Heart left ventricle (tissue), 16 donors: ENCODE measurements at regions of chr18 and their contacts with region 1.

Region 1: DNA sequence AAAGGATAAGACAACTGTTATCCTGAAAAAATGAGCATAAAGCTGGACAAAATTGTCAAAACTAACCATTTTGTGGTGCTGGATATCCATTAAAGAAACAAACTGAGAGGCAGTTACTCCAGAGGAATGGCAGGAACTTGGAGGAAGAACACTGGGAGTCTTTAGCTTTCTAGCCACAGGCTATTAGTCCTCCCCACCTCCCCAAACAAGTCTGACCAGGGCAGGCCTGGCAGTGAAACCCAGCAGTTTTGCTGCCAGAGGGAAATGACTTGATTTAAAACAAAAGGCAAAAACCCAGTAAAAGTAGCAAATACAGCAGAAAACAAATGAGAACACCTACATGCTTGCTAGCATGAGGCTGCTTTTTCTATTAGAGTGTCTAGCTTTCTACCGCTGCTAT is 34.9 kb downstream of the OSBPL1A start:
- DNase-seq: no peak
- ATAC-seq: no peak
- H3K4me3 ChIP-seq: no peak overlapping the region
- H3K27ac ChIP-seq: no peak overlapping the region
- H3K4me1 ChIP-seq: peaks cover 0 to 4% (median 0%) of the 10 kb centered on the region in 12 donors
- H3K27me3 ChIP-seq: no peaks in the 10 kb centered on the region
- CTCF ChIP-seq: no peak
- POLR2A ChIP-seq: no peak

Region 2: DNA sequence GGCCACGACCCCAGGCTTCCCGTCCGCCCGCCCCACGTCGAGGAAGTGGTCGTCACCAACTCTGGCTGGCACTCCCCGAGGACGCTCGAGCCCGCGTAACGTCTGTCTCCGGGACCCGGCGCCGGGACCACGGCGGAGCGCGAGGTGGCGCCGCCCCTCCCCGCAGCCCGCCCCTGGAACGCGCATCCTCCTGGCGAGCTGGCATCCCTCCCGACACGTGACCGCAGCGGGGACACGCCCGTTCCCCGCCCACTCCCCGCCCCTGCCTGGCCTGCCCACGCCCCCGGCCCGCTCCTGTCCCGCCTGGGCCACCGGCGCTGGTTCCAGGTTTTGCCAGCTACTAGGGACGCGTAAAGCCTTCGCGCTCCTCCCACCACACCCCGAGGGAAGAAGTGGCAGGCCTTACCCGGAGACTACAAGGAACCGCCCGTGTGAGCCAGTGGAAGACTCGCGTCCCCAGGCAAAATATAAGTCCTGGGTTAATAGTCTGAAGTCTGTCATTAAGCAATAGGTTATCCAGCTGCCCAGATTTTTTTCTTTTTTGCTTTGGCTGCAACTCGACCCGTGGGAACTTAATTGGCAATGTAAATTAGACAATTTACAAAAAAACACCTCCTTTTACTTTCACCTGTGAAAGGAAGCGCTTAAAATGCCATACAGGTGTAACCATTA is 35.1 kb after region 1 on chr18 and contains the start of gene OSBPL1A:
- intact Hi-C with region 1: loop called in 3 of 10 experiments (anchors 5 kb)
- DNase-seq: peak; percentile 95 to 98 (median 96)
- ATAC-seq: peak; percentile 97 to 99 (median 98)
- H3K4me3 ChIP-seq: peak within 1 kb of the TSS; percentile 65 to 88 (median 76)
- H3K27ac ChIP-seq: peak within 1 kb of the TSS in 11 of 12 donors; percentile 66 to 94 (median 84)
- H3K4me1 ChIP-seq: peaks cover 0 to 20% (median 6%) of the 10 kb centered on the region in 12 donors
- H3K27me3 ChIP-seq: no peaks in the 10 kb centered on the region
- CTCF ChIP-seq: peak in 1 of 12 donors; percentile 28
- POLR2A ChIP-seq: peak in 1 of 2 donors; percentile 54
- total RNA-seq, gene OSBPL1A: 49.7 to 85.4 (median 76.1) TPM

Region 3: GRCh38 chr18:24413148-24413547 is 50.4 kb after region 1 on chr18:
- intact Hi-C with region 1: loop called in 3 of 10 experiments (anchors 5 to 10 kb)
- DNase-seq: no peak
- ATAC-seq: peak in 1 of 4 donors; percentile 38
- H3K4me3 ChIP-seq: no peak overlapping the region
- H3K27ac ChIP-seq: no peak overlapping the region
- H3K4me1 ChIP-seq: no peaks in the 10 kb centered on the region
- H3K27me3 ChIP-seq: peaks cover 0 to 14% (median 0%) of the 10 kb centered on the region in 9 donors
- CTCF ChIP-seq: peak in 8 of 12 donors; percentile 18 to 46 (median 38)
- POLR2A ChIP-seq: no peak

Region 4: DNA sequence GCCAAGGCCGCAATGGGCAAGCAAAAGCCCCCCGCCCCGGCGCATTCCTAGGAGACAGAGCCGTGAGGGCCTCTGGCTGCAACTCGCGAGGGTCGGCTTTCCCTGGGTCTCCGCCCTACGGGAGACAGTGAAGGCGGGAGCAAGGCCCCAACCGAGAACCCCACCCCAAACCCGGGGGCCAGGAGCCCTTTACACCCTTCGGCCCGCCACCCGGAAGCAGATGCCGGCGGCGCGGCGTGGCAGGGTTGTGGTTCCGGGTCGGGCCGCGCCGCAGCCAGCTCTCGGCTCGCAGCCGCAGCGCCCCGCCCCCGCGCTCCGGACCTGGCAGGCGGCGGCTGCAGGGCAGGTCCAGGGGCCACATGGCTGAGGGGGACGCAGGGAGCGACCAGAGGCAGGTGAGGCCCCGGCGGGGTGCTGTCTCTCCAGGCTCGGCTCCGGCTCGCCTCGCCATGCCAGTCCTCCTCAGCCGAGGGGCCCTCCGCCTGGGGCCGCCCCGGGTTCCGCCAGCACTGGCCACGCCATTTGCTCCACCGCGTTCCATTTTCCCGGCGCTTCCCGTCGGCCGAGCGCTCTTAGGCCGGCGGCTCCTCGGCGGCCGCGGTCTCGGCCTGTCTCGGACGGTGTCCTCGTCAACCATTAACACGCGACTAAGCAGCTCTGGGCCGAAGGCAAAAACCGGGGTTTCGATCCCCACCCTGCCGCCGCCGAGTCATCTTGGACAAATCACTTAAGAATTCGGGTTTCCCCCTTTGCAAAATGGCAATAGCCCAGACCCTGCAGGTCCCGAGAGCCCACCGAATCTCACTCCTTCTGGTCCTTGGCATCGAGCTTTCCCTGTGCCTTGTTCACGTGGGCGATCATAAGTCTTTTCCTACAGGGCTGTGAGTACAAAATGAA is 63.9 kb after region 1 on chr18 and contains the start of gene IMPACT:
- intact Hi-C with region 1: loop called in 2 of 10 experiments (anchors 5 to 10 kb)
- DNase-seq: peak; percentile 86 to 93 (median 88)
- ATAC-seq: peak; percentile 75 to 100 (median 97)
- H3K4me3 ChIP-seq: peak within 1 kb of the TSS; percentile 56 to 96 (median 85)
- H3K27ac ChIP-seq: peak within 1 kb of the TSS; percentile 19 to 92 (median 82)
- H3K4me1 ChIP-seq: peaks cover 0 to 18% (median 9%) of the 10 kb centered on the region in 12 donors
- H3K27me3 ChIP-seq: peaks cover 0 to 31% (median 0%) of the 10 kb centered on the region in 9 donors
- CTCF ChIP-seq: no peak
- POLR2A ChIP-seq: peak in 1 of 2 donors; percentile 64
- total RNA-seq, gene IMPACT: 10.8 to 37.6 (median 23.8) TPM

Region 5: GRCh38 chr18:24488824-24489493 is 126.2 kb after region 1 on chr18:
- intact Hi-C with region 1: loop called (anchors 1 to 5 kb)
- DNase-seq: no peak
- ATAC-seq: peak in 1 of 4 donors; percentile 61
- H3K4me3 ChIP-seq: no peak overlapping the region
- H3K27ac ChIP-seq: no peak overlapping the region
- H3K4me1 ChIP-seq: peaks cover 0 to 6% (median 0%) of the 10 kb centered on the region in 12 donors
- H3K27me3 ChIP-seq: no peaks in the 10 kb centered on the region
- CTCF ChIP-seq: peak; percentile 75 to 86 (median 83)
- POLR2A ChIP-seq: no peak